Naive thymus-derived CD4-positive, alpha-beta T cell (primary cell): ENCODE measurements at regions of chr2 and their contacts with region 1.

Region 1: DNA sequence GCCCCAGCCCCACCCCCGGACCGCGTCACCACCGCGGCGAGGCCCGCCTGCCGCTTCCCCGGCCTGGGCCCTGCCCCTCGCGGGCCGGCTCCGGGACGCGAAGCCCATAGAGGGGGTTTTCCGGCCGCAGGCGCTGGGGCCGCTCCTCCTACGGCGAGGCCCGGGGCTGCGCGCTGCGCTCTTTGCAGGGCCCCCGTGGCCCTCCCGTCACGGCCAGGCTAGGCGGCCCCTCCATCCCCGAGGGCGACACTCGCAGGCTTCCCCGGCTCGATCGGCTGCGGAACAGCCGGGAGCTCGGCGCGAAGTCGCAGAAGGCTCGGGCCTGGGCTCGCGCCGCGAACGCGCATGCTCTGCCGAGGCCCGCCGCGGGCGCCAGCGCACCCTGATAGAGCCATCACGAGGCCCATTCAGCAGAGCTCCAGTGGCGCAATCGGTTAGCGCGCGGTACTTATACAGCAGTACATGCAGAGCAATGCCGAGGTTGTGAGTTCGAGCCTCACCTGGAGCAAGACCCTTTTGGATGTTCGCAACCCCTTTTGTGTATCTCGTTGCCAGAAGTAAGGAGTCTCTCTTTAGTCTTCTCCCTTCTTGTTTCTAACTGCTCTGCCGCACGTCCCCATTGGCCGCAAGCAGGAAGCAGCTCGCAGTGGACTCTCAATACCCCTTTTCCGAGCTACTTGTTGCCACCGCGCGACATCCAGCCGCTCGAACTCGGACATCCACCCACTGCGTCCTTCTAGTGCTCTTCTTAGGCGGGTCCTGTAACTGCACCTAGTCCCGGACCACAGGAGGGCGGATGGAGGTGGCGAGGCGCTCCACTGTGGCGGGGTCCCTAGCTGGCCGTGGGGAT is 18.0 kb upstream of the HAAO start:
- DNase-seq: peak; percentile 96 to 99 (median 98)
- ATAC-seq: peak; percentile 90
- H3K4me3 ChIP-seq: peak overlapping the region; percentile 99
- H3K4me3 Mint-ChIP-seq: peak overlapping the region; percentile 90 to 99 (median 98)
- H3K27ac ChIP-seq: peak overlapping the region; percentile 99
- H3K27ac Mint-ChIP-seq: peak overlapping the region; percentile 93 to 100 (median 99)
- H3K4me1 ChIP-seq: peaks cover 0 to 3% of the 10 kb centered on the region in 2 donors
- H3K4me1 Mint-ChIP-seq: peaks cover 0 to 35% (median 20%) of the 10 kb centered on the region in 7 donors
- H3K27me3 ChIP-seq: no peaks in the 10 kb centered on the region
- H3K27me3 Mint-ChIP-seq: peaks cover 0 to 28% (median 0%) of the 10 kb centered on the region in 5 donors

Region 2: GRCh38 chr2:42102024-42102590 is 708.2 kb before region 1 on chr2:
- CTCF ChIA-PET with region 1: no interaction called
- POLR2A ChIA-PET with region 1: interaction called, 5 read pairs
- intact Hi-C with region 1: loop called (anchors 2 to 10 kb)
- DNase-seq: peak; percentile 87 to 97 (median 94)
- ATAC-seq: peak; percentile 85
- H3K4me3 ChIP-seq: peak overlapping the region; percentile 44
- H3K4me3 Mint-ChIP-seq: peak overlapping the region in 8 of 10 donors; percentile 76 to 91 (median 85)
- H3K27ac ChIP-seq: peak overlapping the region; percentile 95
- H3K27ac Mint-ChIP-seq: peak overlapping the region in 2 of 9 donors; percentile 97 to 99
- H3K4me1 ChIP-seq: peaks cover 74 to 81% of the 10 kb centered on the region in 2 donors
- H3K4me1 Mint-ChIP-seq: peaks cover 37 to 69% (median 50%) of the 10 kb centered on the region in 7 donors
- H3K27me3 ChIP-seq: no peaks in the 10 kb centered on the region
- H3K27me3 Mint-ChIP-seq: no peaks in the 10 kb centered on the region

Region 3: DNA sequence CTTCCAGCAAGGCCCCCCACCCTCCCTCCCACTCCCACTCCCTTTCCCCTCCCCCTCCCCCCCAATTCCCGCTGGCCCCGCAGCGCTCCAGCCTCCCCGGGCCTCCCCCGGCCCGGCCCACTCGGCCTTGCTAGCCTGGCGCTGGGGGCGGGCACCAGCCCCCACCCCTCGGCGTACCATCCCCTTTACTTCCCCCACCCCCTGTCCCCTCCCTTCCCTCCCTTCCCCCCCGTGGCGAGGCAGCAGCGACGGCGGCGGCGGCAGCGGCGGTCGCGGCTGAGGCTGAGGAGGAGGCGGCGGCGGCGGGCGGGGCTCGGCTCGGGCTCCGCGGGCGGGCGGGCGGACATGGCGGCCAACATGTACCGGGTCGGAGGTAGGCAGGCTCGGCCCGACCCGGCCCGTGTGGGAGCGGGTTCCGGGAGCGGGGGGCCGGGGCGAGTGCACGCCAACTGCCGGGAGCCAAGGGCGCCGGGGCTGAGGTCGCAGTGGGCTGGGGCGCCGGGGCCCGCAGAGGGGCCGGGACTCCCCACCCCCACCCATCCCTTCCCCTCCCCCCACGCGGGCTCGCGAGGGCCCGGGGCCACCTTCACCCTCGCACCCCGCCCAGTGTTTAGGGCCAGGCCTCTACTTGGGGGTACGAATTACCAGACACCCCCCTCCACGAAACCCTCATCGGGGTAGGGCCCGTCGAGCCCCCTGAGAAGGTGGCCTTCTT is 241.8 kb before region 1 on chr2 and contains the start of gene MTA3:
- CTCF ChIA-PET with region 1: no interaction called
- POLR2A ChIA-PET with region 1: interaction called, 5 read pairs
- intact Hi-C with region 1: loop called (anchors 1 to 5 kb)
- DNase-seq: peak; percentile 51 to 76 (median 67)
- ATAC-seq: peak; percentile 85
- H3K4me3 ChIP-seq: peak within 1 kb of the TSS; percentile 52
- H3K4me3 Mint-ChIP-seq: peak within 1 kb of the TSS; percentile 89 to 99 (median 94)
- H3K27ac ChIP-seq: peak within 1 kb of the TSS; percentile 74
- H3K27ac Mint-ChIP-seq: peak within 1 kb of the TSS; percentile 88 to 97 (median 94)
- H3K4me1 ChIP-seq: peaks cover 8 to 19% of the 10 kb centered on the region in 2 donors
- H3K4me1 Mint-ChIP-seq: peaks cover 11 to 50% (median 41%) of the 10 kb centered on the region in 7 donors
- H3K27me3 ChIP-seq: no peaks in the 10 kb centered on the region
- H3K27me3 Mint-ChIP-seq: no peaks in the 10 kb centered on the region
- total RNA-seq, gene MTA3: 23.9 to 49.1 (median 34.3) TPM

Region 4: GRCh38 chr2:42792583-42793333 is 17.6 kb before region 1 on chr2 and contains the start of gene HAAO:
- CTCF ChIA-PET with region 1: interaction called, 3 read pairs
- POLR2A ChIA-PET with region 1: interaction called, 20 read pairs
- intact Hi-C with region 1: loop called in 1 of 2 experiments (anchors 1 kb)
- DNase-seq: peak in 4 of 9 donors; percentile 13 to 19 (median 17)
- ATAC-seq: peak; percentile 70
- H3K4me3 ChIP-seq: peak within 1 kb of the TSS; percentile 50
- H3K4me3 Mint-ChIP-seq: peak within 1 kb of the TSS; percentile 78 to 94 (median 84)
- H3K27ac ChIP-seq: no peak within 1 kb of the TSS
- H3K27ac Mint-ChIP-seq: peak within 1 kb of the TSS in 7 of 9 donors; percentile 1 to 81 (median 60)
- H3K4me1 ChIP-seq: peaks cover 0 to 15% of the 10 kb centered on the region in 2 donors
- H3K4me1 Mint-ChIP-seq: peaks cover 17 to 48% (median 34%) of the 10 kb centered on the region in 7 donors
- H3K27me3 ChIP-seq: peaks cover 0 to 5% of the 10 kb centered on the region in 2 donors
- H3K27me3 Mint-ChIP-seq: peaks cover 30 to 48% (median 37%) of the 10 kb centered on the region in 5 donors
- total RNA-seq, gene HAAO: 0.82 to 5.1 (median 1.8) TPM in 3 of 5 experiments, not detected in the others

Region 5: DNA sequence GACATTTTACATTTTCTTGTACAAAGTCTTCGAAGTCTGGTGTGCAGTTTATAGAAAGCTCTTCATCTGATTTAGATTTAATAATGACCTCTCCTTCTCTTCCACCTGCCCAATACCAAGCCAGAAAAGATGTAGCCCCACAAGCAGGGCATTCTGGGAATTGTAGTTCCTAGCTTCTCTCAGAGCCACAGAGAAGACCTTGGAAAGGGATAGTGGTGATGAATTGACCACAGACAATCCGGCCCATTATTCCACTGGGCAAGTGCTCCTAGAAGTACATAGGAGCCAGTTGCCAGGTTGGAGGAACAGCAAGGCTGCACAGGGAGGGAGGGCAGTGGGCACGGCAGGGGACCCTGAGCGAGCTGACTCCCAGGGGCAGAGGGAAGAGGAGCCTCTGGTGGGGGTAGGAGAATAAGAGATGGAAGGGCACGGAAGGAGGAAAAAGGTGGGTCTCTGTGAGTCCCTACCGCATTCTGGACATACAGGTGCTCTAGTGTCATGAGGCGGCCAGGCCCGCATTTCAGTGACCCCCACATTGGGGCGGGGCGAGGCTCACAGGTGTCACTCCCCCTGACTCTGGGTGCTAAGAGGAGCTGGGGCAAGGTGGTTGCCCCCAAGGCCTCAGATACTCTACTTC is 134.6 kb after region 1 on chr2:
- CTCF ChIA-PET with region 1: no interaction called
- POLR2A ChIA-PET with region 1: no interaction called
- intact Hi-C with region 1: no loop called
- DNase-seq: no peak
- ATAC-seq: no peak
- H3K4me3 ChIP-seq: no peak overlapping the region
- H3K4me3 Mint-ChIP-seq: no peak overlapping the region
- H3K27ac ChIP-seq: no peak overlapping the region
- H3K27ac Mint-ChIP-seq: no peak overlapping the region
- H3K4me1 ChIP-seq: no peaks in the 10 kb centered on the region
- H3K4me1 Mint-ChIP-seq: peaks cover 0 to 7% (median 5%) of the 10 kb centered on the region in 7 donors
- H3K27me3 ChIP-seq: no peaks in the 10 kb centered on the region
- H3K27me3 Mint-ChIP-seq: peaks cover 0 to 8% (median 0%) of the 10 kb centered on the region in 5 donors

Region 6: DNA sequence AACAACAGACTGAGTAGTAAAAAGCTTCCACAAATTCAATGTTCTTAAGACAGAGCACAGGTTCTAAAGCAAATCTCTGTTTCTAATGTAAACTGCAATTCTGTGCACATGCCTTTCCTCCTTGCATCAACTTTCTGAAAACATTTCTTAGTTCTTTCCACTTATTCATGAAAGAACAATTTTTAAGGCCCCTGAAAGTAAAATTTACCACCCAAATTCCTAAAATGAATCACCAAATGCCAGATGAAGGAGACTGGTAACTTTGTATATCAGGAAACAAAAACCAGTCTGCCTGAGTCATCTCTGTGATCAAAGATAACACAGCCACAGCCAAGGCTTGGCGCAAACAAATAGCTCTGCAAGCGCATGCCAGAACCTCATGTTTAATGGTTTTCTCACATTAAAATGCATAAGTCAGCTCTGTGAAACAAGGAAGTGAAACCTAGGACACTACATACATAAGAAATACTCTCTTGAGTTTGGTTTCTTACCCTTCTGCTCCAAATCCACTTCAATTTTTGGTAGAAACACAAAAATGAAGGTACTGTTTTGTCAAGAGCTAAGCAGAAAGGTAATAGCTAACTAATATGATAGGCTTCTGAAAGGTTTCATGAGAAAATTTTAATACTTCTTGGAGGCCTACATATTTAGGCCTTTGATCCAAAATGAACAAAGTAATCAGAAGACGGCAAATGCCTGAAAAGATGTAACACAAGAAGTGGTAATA is 616.1 kb after region 1 on chr2:
- CTCF ChIA-PET with region 1: no interaction called
- POLR2A ChIA-PET with region 1: no interaction called
- intact Hi-C with region 1: loop called in 1 of 2 experiments (anchors 5 kb)
- DNase-seq: peak in 5 of 9 donors; percentile 4 to 56 (median 17)
- ATAC-seq: peak; percentile 94
- H3K4me3 ChIP-seq: no peak overlapping the region
- H3K4me3 Mint-ChIP-seq: peak overlapping the region in 4 of 10 donors; percentile 3 to 66 (median 5)
- H3K27ac ChIP-seq: no peak overlapping the region
- H3K27ac Mint-ChIP-seq: peak overlapping the region in 5 of 9 donors; percentile 0 to 89 (median 85)
- H3K4me1 ChIP-seq: peaks cover 0 to 35% of the 10 kb centered on the region in 2 donors
- H3K4me1 Mint-ChIP-seq: peaks cover 8 to 43% (median 30%) of the 10 kb centered on the region in 7 donors
- H3K27me3 ChIP-seq: no peaks in the 10 kb centered on the region
- H3K27me3 Mint-ChIP-seq: peaks cover 0 to 6% (median 0%) of the 10 kb centered on the region in 5 donors

Region 7: GRCh38 chr2:43773876-43774613 is 963.7 kb after region 1 on chr2 and contains the start of gene DYNC2LI1:
- CTCF ChIA-PET with region 1: no interaction called
- POLR2A ChIA-PET with region 1: interaction called, 3 read pairs
- intact Hi-C with region 1: loop called in 1 of 2 experiments (anchors 10 kb)
- DNase-seq: peak; percentile 44 to 81 (median 65)
- ATAC-seq: peak; percentile 97
- H3K4me3 ChIP-seq: peak within 1 kb of the TSS; percentile 75
- H3K4me3 Mint-ChIP-seq: peak within 1 kb of the TSS; percentile 92 to 99 (median 96)
- H3K27ac ChIP-seq: peak within 1 kb of the TSS; percentile 67
- H3K27ac Mint-ChIP-seq: peak within 1 kb of the TSS; percentile 35 to 93 (median 79)
- H3K4me1 ChIP-seq: no peaks in the 10 kb centered on the region
- H3K4me1 Mint-ChIP-seq: peaks cover 10 to 21% (median 13%) of the 10 kb centered on the region in 7 donors
- H3K27me3 ChIP-seq: no peaks in the 10 kb centered on the region
- H3K27me3 Mint-ChIP-seq: peaks cover 0 to 4% (median 0%) of the 10 kb centered on the region in 5 donors
- total RNA-seq, gene DYNC2LI1: 1.9 to 6.1 (median 5.1) TPM

Region 8: GRCh38 chr2:44361330-44362206 is 1551.2 kb after region 1 on chr2 and contains the starts of genes CAMKMT and PREPL:
- CTCF ChIA-PET with region 1: no interaction called
- POLR2A ChIA-PET with region 1: interaction called, 9 read pairs
- intact Hi-C with region 1: loop called (anchors 5 kb)
- DNase-seq: peak; percentile 95 to 99 (median 99)
- ATAC-seq: peak; percentile 93
- H3K4me3 ChIP-seq: peak within 1 kb of the TSS; percentile 88
- H3K4me3 Mint-ChIP-seq: peak within 1 kb of the TSS; percentile 92 to 100 (median 98)
- H3K27ac ChIP-seq: peak within 1 kb of the TSS; percentile 99
- H3K27ac Mint-ChIP-seq: peak within 1 kb of the TSS; percentile 96 to 100 (median 99)
- H3K4me1 ChIP-seq: peaks cover 16 to 17% of the 10 kb centered on the region in 2 donors
- H3K4me1 Mint-ChIP-seq: peaks cover 22 to 81% (median 61%) of the 10 kb centered on the region in 7 donors
- H3K27me3 ChIP-seq: no peaks in the 10 kb centered on the region
- H3K27me3 Mint-ChIP-seq: peaks cover 0 to 3% (median 0%) of the 10 kb centered on the region in 5 donors
- total RNA-seq, gene CAMKMT: 11.1 to 20.8 (median 18.7) TPM
- total RNA-seq, gene PREPL: 22.0 to 41.9 (median 28.5) TPM